ENCODE measurements at regions of chrX and their contacts with region 1.

Region 1: DNA sequence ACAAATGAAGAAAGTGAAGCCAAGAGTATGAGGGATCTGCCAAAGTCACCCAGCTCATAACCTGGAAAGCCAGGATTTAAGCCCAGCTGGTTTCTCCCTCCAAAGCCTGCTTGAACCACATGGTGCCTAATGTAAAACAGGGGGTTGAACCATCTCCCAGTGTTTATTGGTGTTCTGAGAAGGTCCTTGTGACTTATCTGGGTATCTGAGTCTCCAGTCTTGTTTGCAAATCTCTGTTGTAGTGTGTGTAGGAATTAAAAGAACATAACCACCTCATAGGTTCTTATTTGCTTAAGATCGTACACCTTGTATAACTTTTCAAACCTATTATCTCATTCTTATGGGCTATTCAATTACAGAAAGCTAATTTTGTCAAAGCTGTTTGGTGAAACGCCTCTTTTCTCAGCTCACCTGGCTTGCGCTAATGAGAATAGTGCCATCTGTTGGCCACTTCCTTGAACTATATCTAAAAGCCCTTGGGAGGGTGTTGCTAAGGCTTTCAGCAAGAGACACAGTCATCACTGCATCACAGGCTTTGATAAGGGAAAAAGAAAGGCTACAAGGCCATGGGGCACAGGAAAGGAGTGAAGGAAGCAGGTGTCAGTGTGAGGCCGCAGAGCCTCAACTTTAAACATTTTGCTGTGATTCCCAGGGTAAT is 34.0 kb downstream of the ETDB start:
- H3K4me3 Mint-ChIP-seq: no peak overlapping the region
- H3K27ac Mint-ChIP-seq: no peak overlapping the region
- H3K4me1 Mint-ChIP-seq: peaks cover 5% of the 10 kb centered on the region
- H3K27me3 Mint-ChIP-seq: peaks cover 2% of the 10 kb centered on the region

Region 2: DNA sequence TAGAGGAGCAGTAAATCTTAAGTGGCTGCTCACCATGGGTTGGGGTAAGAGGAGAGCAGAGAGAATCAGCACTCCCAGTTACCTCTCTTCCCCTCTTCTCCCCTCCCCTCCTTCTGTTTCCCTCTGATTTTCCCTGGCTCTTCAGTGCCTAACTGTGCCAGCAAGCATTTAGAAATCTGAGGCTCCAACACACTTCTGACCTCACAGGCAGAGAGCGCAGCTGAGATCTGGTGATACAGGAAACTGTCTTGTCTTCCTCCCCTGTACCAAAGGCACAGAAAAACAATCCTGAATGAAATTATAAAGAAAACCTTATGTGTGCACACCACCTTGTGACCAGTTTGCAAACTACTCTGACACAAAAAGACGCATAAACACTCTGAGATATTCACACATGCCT is 178.0 kb before region 1 on chrX:
- intact Hi-C with region 1: no loop called
- H3K4me3 Mint-ChIP-seq: no peak overlapping the region
- H3K27ac Mint-ChIP-seq: no peak overlapping the region
- H3K4me1 Mint-ChIP-seq: no peaks in the 10 kb centered on the region
- H3K27me3 Mint-ChIP-seq: no peaks in the 10 kb centered on the region

Region 3: GRCh38 chrX:134936542-134936941 is 149.8 kb before region 1 on chrX:
- intact Hi-C with region 1: no loop called
- H3K4me3 Mint-ChIP-seq: no peak overlapping the region
- H3K27ac Mint-ChIP-seq: no peak overlapping the region
- H3K4me1 Mint-ChIP-seq: no peaks in the 10 kb centered on the region
- H3K27me3 Mint-ChIP-seq: no peaks in the 10 kb centered on the region

Region 4: DNA sequence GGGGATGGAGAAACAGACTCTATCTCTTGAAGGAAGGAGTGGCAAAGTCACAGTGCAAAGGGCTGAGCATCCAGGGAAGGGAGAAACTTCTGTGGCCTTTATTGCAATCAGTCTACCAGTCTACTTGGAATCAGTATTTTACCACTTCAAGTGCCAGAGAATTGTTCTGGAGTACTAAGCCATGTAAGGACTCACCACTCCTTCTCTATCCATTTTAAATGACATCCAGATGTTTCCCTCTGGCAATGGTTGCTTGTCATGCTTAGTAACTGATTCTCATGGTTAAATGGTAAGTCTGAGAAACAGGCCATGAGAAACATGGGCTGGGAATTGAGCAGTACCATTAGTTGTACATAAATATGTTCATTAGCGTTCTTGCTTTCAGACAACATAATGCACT is 116.6 kb before region 1 on chrX:
- intact Hi-C with region 1: loop called (anchors 5 kb)
- H3K4me3 Mint-ChIP-seq: no peak overlapping the region
- H3K27ac Mint-ChIP-seq: no peak overlapping the region
- H3K4me1 Mint-ChIP-seq: peaks cover 3% of the 10 kb centered on the region
- H3K27me3 Mint-ChIP-seq: peaks cover 9% of the 10 kb centered on the region

Measured in dendritic cell treated with granulocyte-macrophage colony-stimulating factor and Interleukin-4, amounts not matched to agents 40 ng/mL and 50 ng/mL, for 4 days (primary cell).